Cardiac septum (tissue), 1 donor: ENCODE measurements at regions of chr9 and their contacts with region 1.

Region 1: GRCh38 chr9:72443855-72444254 is 77.6 kb upstream of the TMC1 start:
- DNase-seq: no peak

Region 2: DNA sequence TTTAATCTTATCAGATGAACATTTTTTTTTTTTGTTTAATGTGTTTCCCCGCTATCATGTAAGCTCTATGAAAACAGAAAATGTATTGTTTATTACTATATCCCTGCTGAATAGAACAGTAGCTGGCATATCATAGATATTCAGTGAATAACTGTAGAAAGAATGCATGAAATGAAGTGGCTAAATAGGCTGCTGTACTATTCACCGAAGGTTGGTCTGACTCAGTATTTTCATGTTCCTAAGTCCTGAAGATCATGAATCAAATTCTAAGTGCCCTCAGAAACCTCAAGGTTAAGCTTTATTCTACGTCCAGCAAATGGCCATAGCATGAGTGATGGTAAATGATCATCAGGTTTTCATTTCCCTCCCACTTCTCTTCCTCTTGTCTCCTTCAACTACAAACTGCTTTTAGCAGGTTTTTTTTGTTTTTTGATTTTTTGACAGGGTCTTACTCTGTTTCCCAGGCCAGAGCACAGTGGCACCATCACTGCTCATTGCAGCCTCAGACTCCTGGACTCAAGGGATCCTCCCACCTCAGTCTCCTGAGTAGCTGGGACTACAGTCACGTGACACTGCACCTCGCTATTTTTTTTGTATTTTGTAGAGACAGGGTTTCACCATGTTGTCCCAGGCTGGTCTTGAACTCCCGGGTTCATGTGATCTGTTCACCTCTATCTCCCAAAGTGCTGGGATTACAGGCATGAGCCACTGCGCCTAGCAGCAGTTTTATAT is 59.7 kb before region 1 on chr9:
- intact Hi-C with region 1: loop called (anchors 10 kb)
- DNase-seq: no peak

Region 3: GRCh38 chr9:72396247-72397091 is 47.4 kb before region 1 on chr9:
- intact Hi-C with region 1: no loop called
- DNase-seq: no peak

Region 4: GRCh38 chr9:72635197-72635596 is 191.3 kb after region 1 on chr9:
- intact Hi-C with region 1: no loop called
- DNase-seq: no peak